Dendritic cell treated with granulocyte-macrophage colony-stimulating factor and Interleukin-4, amounts not matched to agents 40 ng/mL and 50 ng/mL, for 4 days (primary cell): ENCODE measurements at regions of chr15 and their contacts with region 1.

Region 1: DNA sequence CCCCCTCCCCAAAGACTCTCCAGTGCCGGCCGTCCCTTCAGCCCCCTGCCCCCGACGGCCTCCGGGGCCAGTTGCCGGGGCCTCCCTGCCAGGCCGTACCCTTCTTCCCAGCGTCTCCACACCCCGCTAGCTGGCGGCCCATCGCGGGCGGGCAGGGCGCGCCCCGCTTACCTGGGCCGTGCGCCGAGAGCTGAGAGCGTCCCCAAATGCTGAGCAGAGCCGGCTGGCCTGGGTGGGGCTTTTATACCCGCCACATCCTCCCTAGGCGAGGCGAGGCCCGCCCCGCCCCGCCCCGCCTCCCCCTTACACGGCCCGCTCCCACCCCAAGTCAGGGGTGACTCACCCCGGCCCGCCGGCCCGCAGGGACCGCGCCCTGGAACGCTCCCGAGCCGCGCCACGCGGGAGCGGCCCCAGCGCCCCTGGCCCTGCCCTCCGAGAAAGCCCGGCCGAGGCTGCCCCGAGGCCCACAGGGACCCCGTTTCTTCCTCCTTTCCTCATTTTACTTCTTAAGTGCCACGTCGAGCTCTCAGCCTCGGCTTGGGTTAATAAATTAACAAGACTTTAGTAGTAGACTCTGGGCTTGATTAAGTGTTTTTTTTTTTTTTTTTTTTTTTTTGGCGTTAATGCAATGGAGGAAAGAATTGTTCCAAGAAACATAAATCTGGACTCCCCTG is at the start of gene ANXA2:
- H3K4me3 Mint-ChIP-seq: peak within 1 kb of the TSS; percentile 95
- H3K27ac Mint-ChIP-seq: peak within 1 kb of the TSS; percentile 96
- H3K4me1 Mint-ChIP-seq: peaks cover 40% of the 10 kb centered on the region
- H3K27me3 Mint-ChIP-seq: no peaks in the 10 kb centered on the region

Region 2: GRCh38 chr15:59688841-59689625 is 708.9 kb before region 1 on chr15 and contains the start of gene BNIP2:
- intact Hi-C with region 1: loop called (anchors 2 kb)
- H3K4me3 Mint-ChIP-seq: peak within 1 kb of the TSS; percentile 89
- H3K27ac Mint-ChIP-seq: peak within 1 kb of the TSS; percentile 97
- H3K4me1 Mint-ChIP-seq: peaks cover 25% of the 10 kb centered on the region
- H3K27me3 Mint-ChIP-seq: no peaks in the 10 kb centered on the region

Region 3: GRCh38 chr15:60162241-60162967 is 235.5 kb before region 1 on chr15:
- intact Hi-C with region 1: no loop called
- H3K4me3 Mint-ChIP-seq: no peak overlapping the region
- H3K27ac Mint-ChIP-seq: no peak overlapping the region
- H3K4me1 Mint-ChIP-seq: no peaks in the 10 kb centered on the region
- H3K27me3 Mint-ChIP-seq: peaks cover 1% of the 10 kb centered on the region

Region 4: GRCh38 chr15:60351066-60351465 is 46.8 kb before region 1 on chr15:
- intact Hi-C with region 1: no loop called
- H3K4me3 Mint-ChIP-seq: no peak overlapping the region
- H3K27ac Mint-ChIP-seq: no peak overlapping the region
- H3K4me1 Mint-ChIP-seq: peaks cover 26% of the 10 kb centered on the region
- H3K27me3 Mint-ChIP-seq: no peaks in the 10 kb centered on the region

Region 5: GRCh38 chr15:60362321-60363086 is 35.4 kb before region 1 on chr15:
- intact Hi-C with region 1: loop called (anchors 5 kb)
- H3K4me3 Mint-ChIP-seq: no peak overlapping the region
- H3K27ac Mint-ChIP-seq: peak overlapping the region; percentile 63
- H3K4me1 Mint-ChIP-seq: peaks cover 41% of the 10 kb centered on the region
- H3K27me3 Mint-ChIP-seq: no peaks in the 10 kb centered on the region

Region 6: GRCh38 chr15:60408438-60409105 is 10.7 kb after region 1 on chr15:
- intact Hi-C with region 1: loop called (anchors 1 kb)
- H3K4me3 Mint-ChIP-seq: no peak overlapping the region
- H3K27ac Mint-ChIP-seq: peak overlapping the region; percentile 87
- H3K4me1 Mint-ChIP-seq: peaks cover 31% of the 10 kb centered on the region
- H3K27me3 Mint-ChIP-seq: no peaks in the 10 kb centered on the region

Region 7: GRCh38 chr15:60426870-60427508 is 29.1 kb after region 1 on chr15:
- intact Hi-C with region 1: loop called (anchors 5 kb)
- H3K4me3 Mint-ChIP-seq: no peak overlapping the region
- H3K27ac Mint-ChIP-seq: no peak overlapping the region
- H3K4me1 Mint-ChIP-seq: peaks cover 19% of the 10 kb centered on the region
- H3K27me3 Mint-ChIP-seq: no peaks in the 10 kb centered on the region

Region 8: DNA sequence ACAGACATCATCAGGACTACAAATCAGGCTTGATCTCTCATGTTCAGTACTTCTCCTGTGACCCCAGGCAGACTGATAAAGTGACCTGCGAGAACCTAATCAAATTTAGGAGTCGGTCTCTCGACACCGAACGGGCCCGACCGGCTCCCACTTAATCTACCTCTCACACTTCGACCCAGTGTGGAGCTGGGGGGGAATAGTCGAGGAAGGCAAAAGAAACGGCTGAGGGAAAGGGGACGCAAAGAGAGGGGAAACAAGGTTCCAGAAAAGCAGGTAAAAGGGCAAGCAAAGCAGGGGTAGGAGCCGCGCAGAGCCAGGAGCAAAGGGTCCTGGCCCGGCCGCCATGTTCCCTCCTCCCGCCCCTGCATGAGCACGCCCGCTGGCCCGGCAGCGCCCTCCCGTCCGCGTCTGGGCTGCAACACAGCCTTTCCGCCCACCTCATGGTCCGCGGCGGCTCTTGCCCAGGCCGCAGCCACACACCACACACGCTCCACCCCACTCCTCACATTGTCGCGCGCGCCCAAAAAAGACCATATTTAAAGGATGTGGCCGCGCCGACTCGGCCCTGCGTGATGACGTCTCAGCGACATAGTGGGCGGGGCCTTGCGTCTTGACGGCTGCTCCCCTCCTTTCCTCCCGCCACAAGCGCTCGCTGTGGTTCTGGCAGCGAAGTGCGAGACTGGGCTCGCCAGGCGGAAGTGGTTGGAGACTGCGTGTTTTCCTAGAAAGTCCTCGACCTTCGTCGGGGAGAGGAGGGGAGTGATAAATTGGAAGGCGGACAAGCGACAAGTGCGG is 80.9 kb after region 1 on chr15 and contains the start of gene ICE2:
- intact Hi-C with region 1: loop called (anchors 5 kb)
- H3K4me3 Mint-ChIP-seq: peak within 1 kb of the TSS; percentile 99
- H3K27ac Mint-ChIP-seq: peak within 1 kb of the TSS; percentile 99
- H3K4me1 Mint-ChIP-seq: peaks cover 29% of the 10 kb centered on the region
- H3K27me3 Mint-ChIP-seq: no peaks in the 10 kb centered on the region

Region 9: DNA sequence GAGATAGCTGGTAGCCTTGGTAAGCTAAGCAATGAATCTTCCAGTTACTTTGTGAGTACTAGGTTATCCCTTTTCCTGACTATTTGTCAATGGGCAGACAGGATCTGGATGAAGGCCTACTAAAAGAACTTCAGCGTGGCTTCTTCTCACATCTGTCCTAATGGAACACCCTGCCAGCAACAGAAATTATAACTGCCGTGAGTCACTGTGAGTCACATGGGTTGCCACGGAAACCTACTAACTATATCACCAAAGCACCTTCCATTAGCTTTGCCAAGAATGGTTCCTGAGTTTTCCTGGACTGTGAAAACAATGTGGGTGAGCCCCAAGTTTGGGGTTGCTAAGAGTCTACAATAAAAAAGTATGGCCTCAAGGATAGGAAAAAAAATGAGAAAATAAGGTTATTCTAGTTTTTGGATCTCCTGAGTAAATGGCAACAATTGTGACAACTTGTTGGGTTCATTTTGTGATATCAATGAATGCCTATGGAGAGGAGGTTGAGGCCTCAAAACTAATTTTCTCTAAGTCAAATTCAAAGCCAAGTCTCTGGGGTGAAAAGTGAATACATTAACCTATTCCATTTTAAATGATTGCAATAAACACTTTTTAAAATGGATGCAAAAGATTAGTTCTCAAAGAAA is 276.1 kb after region 1 on chr15:
- intact Hi-C with region 1: no loop called
- H3K4me3 Mint-ChIP-seq: no peak overlapping the region
- H3K27ac Mint-ChIP-seq: no peak overlapping the region
- H3K4me1 Mint-ChIP-seq: no peaks in the 10 kb centered on the region
- H3K27me3 Mint-ChIP-seq: peaks cover 8% of the 10 kb centered on the region